GM10248 (cell line): ENCODE measurements at regions of chr5 and their contacts with region 1.

Region 1: GRCh38 chr5:151659001-151659754 is 27.5 kb downstream of the SPARC start:
- DNase-seq: peak; percentile 82
- CTCF ChIP-seq: peak; percentile 67

Region 2: DNA sequence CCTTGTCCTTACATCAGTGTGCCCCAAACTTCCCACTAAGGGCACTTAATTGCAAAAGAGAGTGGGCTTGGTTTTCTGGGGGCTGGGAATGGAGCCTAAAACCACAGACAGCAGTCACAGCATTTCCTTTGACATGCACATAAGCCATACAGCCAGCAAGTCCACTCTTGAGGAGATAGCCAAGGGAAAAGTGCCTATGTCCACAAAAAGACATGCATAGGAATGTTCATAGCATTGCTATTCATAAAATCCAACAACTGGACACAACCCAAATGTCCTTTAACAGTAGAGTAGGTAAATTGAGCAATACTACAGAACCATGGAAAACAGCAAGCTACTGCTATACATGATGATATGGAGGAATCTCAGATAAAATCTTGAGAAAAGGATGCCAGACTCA is 56.4 kb before region 1 on chr5:
- CTCF ChIA-PET with region 1: no interaction called
- POLR2A ChIA-PET with region 1: no interaction called
- DNase-seq: no peak
- CTCF ChIP-seq: no peak

Region 3: GRCh38 chr5:151680944-151681427 is 21.8 kb after region 1 on chr5:
- CTCF ChIA-PET with region 1: interaction called, 72 read pairs
- POLR2A ChIA-PET with region 1: no interaction called
- DNase-seq: no peak
- CTCF ChIP-seq: no peak

Region 4: DNA sequence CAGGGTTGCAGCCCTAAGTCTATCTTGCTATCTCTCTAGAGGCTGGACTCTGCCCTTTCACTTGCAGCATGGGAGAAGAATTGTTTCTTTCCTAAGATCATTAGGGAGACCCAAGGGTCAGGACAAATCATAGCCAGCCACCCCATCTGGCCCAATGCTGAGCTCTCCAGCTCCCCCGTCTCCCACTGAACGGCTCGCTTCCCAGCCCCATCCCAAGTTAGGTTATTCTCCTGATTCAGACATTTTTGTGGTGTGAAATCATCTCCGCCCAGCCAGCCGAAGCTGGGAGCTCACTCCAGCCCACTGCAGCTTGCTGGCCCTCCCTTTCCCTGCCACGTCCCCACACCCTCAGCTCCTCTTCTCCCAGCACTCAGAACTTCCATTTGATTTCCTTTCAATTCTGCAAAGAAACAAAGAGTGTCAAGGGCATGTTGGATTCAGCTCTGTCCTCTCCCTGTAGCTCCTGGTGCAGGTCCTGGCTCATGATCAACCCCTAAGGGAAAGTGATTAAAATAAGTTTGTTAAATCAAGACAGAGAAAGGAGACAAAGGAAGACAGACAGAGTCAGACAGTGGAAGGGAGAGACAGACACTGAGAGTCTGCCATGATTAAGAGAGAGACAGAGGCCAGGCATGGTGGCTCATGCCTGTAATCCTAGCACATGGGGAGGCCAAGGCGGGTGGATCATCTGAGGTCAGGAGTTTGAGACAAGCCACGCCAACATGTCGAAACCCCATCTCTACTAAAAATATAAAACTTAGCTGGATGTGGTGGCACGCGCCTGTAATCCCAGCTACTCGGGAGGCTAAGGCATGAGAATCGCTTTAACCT is 40.1 kb after region 1 on chr5:
- CTCF ChIA-PET with region 1: interaction called, 25 read pairs
- POLR2A ChIA-PET with region 1: no interaction called
- DNase-seq: no peak
- CTCF ChIP-seq: no peak

Region 5: GRCh38 chr5:151719228-151720000 is 60.2 kb after region 1 on chr5:
- CTCF ChIA-PET with region 1: interaction called, 60 read pairs
- POLR2A ChIA-PET with region 1: interaction called, 4 read pairs
- DNase-seq: no peak
- CTCF ChIP-seq: peak; percentile 40

Region 6: GRCh38 chr5:151751091-151751490 is 91.9 kb after region 1 on chr5:
- CTCF ChIA-PET with region 1: interaction called, 363 read pairs
- POLR2A ChIA-PET with region 1: no interaction called
- DNase-seq: no peak
- CTCF ChIP-seq: no peak

Region 7: GRCh38 chr5:151771259-151772028 is 112.3 kb after region 1 on chr5 and contains the start of gene G3BP1:
- CTCF ChIA-PET with region 1: interaction called, 49 read pairs
- POLR2A ChIA-PET with region 1: interaction called, 4 read pairs
- DNase-seq: peak; percentile 97
- CTCF ChIP-seq: peak; percentile 68